IMR-90 (cell line): ENCODE measurements at regions of chr5 and their contacts with region 1.

Region 1: GRCh38 chr5:127492854-127493738 is 24.3 kb upstream of the PRRC1 start:
- DNase-seq: peak; percentile 36
- ATAC-seq: peak; percentile 79
- H3K4me3 ChIP-seq: no peak overlapping the region
- H3K27ac ChIP-seq: no peak overlapping the region
- H3K4me1 ChIP-seq: no peaks in the 10 kb centered on the region
- H3K27me3 ChIP-seq: peaks cover 13% of the 10 kb centered on the region
- CTCF ChIP-seq: peak; percentile 70
- POLR2A ChIP-seq: no peak
- RAD21 ChIP-seq: peak; percentile 11; the same call in 1 of the 2 replicates

Region 2: DNA sequence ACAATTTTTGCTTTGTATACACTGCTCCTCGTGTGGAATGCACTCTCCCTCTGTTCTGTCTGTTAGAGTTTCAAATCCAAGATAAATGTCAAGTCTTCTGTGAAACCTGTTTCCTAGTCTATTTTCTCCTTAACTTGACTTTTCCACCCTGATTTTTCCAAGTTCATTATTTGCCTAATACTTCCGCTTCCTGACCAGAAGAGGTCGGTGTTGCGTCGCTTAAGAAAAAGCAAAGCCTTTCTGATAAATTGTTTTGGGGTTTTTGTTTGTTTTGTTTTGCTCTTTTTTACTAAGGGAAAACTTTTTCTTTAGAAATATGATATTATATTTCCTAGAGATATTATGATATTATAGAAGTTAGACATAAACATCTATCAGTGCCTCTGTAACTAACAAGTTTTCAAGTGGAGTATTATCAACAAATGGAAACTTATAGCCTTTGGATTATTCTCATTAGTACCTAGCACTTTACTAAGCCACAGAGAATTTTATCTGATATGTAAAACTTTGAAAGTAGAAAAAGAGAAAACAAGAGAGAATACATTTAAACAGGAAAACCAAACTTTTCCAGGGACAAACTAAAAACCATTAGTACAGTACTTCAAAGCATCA is 836.6 kb before region 1 on chr5:
- CTCF ChIA-PET with region 1: no interaction called
- POLR2A ChIA-PET with region 1: no interaction called
- dilution Hi-C with region 1: no loop called
- in situ Hi-C with region 1: no loop called
- intact Hi-C with region 1: loop called (anchors 2 kb)
- DNase-seq: peak; percentile 57
- ATAC-seq: peak; percentile 44; the same call in 1 of the 2 replicates
- H3K4me3 ChIP-seq: no peak overlapping the region
- H3K27ac ChIP-seq: no peak overlapping the region
- H3K4me1 ChIP-seq: no peaks in the 10 kb centered on the region
- H3K27me3 ChIP-seq: no peaks in the 10 kb centered on the region
- CTCF ChIP-seq: peak; percentile 94
- POLR2A ChIP-seq: no peak
- RAD21 ChIP-seq: peak; percentile 84

Region 3: DNA sequence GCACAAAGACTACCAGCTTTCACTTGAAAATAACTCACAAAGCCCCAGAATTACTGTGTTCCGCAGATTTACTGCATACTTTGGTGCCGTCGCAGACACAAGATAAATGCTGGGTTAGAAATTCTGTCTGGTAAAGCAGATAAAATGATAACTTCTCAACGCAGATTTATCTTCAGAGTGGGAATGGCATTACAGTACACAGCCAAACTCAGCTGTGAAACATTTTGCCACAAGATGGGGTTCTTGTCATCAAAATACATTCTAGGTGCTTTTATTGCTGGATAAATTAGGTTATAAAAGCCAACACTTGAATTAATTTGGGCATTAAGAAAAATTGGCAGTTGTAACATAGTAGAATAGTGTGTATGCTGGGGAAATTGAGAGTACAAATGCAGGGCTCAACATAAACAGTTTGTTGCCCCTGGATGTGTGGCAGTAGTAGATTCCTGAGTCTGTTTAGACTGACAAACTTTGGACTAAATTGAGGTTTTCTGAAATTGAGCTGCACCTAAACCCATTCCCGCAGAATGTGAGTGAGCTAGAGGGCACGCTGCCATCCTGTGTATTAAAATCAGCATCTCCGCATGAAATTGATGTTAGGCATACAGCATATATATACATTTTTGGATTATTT is 655.1 kb before region 1 on chr5:
- CTCF ChIA-PET with region 1: no interaction called
- POLR2A ChIA-PET with region 1: no interaction called
- dilution Hi-C with region 1: no loop called
- in situ Hi-C with region 1: no loop called
- intact Hi-C with region 1: loop called (anchors 1 kb)
- DNase-seq: peak; percentile 53
- ATAC-seq: peak; percentile 61
- H3K4me3 ChIP-seq: no peak overlapping the region
- H3K27ac ChIP-seq: no peak overlapping the region
- H3K4me1 ChIP-seq: no peaks in the 10 kb centered on the region
- H3K27me3 ChIP-seq: no peaks in the 10 kb centered on the region
- CTCF ChIP-seq: peak; percentile 68
- POLR2A ChIP-seq: no peak
- RAD21 ChIP-seq: peak; percentile 69

Region 4: GRCh38 chr5:127423173-127423798 is 69.8 kb before region 1 on chr5:
- CTCF ChIA-PET with region 1: no interaction called
- POLR2A ChIA-PET with region 1: no interaction called
- dilution Hi-C with region 1: no loop called
- in situ Hi-C with region 1: no loop called
- intact Hi-C with region 1: no loop called
- DNase-seq: no peak
- ATAC-seq: no peak
- H3K4me3 ChIP-seq: no peak overlapping the region
- H3K27ac ChIP-seq: no peak overlapping the region
- H3K4me1 ChIP-seq: no peaks in the 10 kb centered on the region
- H3K27me3 ChIP-seq: peaks cover 9% of the 10 kb centered on the region
- CTCF ChIP-seq: no peak
- POLR2A ChIP-seq: no peak
- RAD21 ChIP-seq: no peak

Region 5: DNA sequence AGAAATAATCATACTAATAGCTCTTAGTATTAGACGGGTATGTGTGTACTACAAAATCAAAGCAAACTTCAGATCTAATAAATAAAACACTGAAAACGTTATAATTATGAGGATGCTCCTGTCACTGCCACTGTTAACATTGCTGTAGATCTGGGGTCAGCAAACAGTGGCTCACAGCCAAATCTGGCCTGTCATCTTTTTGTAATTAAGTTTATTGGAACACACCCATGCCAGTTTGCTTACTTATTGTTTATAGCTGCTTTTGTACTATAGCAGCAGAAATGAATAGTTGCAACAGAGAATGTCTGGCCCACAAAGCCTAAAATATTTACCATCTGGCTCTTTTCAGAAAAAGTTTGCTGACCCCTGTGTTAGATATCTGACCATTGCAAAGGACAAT is 56.4 kb after region 1 on chr5:
- CTCF ChIA-PET with region 1: no interaction called
- POLR2A ChIA-PET with region 1: no interaction called
- dilution Hi-C with region 1: no loop called
- in situ Hi-C with region 1: no loop called
- intact Hi-C with region 1: no loop called
- DNase-seq: no peak
- ATAC-seq: no peak
- H3K4me3 ChIP-seq: no peak overlapping the region
- H3K27ac ChIP-seq: no peak overlapping the region
- H3K4me1 ChIP-seq: 0 out of 2 replicates have a peak, but pooled peaks cover 2% of the 10 kb centered on the region
- H3K27me3 ChIP-seq: no peaks in the 10 kb centered on the region
- CTCF ChIP-seq: no peak
- POLR2A ChIP-seq: no peak
- RAD21 ChIP-seq: no peak